ENCODE measurements at regions of chr1 and their contacts with region 1.

Region 1: GRCh38 chr1:197356723-197357533 is 88.9 kb downstream of the CRB1 start:
- DNase-seq: no peak
- H3K4me3 ChIP-seq: no peak overlapping the region
- H3K27ac ChIP-seq: no peak overlapping the region
- H3K4me1 ChIP-seq: no peaks in the 10 kb centered on the region
- H3K27me3 ChIP-seq: no peaks in the 10 kb centered on the region
- CTCF ChIP-seq: peak; percentile 24 to 55 (median 32)

Region 2: DNA sequence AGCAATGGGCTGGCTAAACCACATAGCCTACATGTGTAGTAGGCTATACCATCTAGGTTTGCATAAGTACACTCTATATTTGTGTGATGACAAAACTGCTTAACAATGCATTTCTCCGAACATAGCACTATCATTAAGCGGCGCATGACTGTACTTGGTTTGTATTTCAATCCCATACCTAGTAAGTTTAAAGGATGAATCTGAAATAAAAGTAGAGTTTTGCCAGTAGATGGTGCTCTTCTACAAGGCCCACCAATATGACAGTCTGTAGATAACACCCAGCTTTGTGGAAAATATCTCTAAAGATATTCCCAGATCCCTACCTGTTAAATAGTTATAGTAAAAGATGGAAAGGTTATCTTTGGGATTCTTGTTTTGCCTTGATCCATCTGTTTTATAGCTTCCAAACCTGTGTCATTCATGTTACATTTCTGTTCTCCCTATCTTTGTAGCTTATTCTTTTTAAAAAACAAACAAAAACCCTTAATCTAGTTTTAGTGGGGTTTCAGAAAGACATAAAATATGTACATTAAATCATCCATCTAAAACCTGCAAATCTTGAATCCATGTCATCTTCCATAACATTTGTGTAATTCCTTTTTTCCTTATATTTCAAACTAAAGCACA is 176.6 kb before region 1 on chr1:
- intact Hi-C with region 1: loop called (anchors 2 kb)
- DNase-seq: no peak
- H3K4me3 ChIP-seq: no peak overlapping the region
- H3K27ac ChIP-seq: no peak overlapping the region
- H3K4me1 ChIP-seq: no peaks in the 10 kb centered on the region
- H3K27me3 ChIP-seq: no peaks in the 10 kb centered on the region
- CTCF ChIP-seq: peak; percentile 14 to 61 (median 24)

Measured in ascending aorta (tissue), 2 donors.